ENCODE measurements at regions of chr15 and their contacts with region 1.

Region 1: GRCh38 chr15:89556413-89557262 is 18.6 kb upstream of the TICRR start:
- DNase-seq: peak; percentile 49
- H3K4me3 Mint-ChIP-seq: no peak overlapping the region
- H3K27ac Mint-ChIP-seq: no peak overlapping the region
- H3K4me1 Mint-ChIP-seq: peaks cover 1% of the 10 kb centered on the region
- H3K27me3 Mint-ChIP-seq: peaks cover 4% of the 10 kb centered on the region

Region 2: DNA sequence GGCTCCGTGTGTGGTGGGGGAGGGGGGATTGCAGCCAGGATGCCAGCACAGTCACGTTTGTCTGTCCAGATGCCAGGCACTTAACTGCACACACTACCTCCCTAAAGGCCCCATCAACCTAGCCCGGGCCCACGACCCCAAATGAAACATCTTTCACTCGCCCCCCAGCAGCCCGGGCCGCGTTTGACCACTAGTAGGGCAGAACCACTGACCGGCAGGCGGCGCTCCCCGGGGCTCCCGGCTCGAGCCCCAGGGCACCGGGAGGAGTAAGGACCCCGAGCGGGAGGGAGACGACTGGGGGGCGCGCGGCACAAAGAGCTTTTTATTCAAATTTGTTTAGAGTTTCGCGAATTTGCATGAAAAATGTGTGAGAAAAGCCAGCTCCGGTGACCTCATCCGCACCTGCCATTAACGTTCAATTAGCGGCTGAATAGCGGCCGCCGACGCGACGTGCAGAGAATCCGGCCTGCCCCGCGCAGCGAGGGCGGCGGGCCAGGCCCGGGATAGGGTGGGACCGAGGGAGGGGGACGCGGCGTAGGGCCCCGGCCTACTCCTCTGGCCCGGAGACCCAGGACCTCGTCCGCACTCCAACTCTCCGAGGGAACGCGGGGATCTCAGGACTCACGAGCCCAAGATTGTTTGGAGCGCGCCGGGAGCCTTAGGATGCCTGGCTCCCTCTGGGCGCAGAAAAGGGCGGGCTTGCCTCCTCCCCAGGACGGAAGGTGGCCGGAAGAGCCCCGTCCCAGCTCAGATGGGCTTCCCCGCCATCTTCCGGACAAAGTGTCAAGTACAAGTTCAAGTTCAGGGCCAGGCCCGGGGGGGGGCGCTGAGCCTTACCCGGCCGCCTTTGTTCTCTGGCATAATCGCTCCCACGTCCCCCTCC is 157.2 kb before region 1 on chr15:
- CTCF ChIA-PET with region 1: no interaction called
- POLR2A ChIA-PET with region 1: no interaction called
- intact Hi-C with region 1: no loop called
- DNase-seq: peak; percentile 55
- H3K4me3 Mint-ChIP-seq: peak overlapping the region; percentile 73
- H3K27ac Mint-ChIP-seq: no peak overlapping the region
- H3K4me1 Mint-ChIP-seq: peaks cover 7% of the 10 kb centered on the region
- H3K27me3 Mint-ChIP-seq: peaks cover 56% of the 10 kb centered on the region

Region 3: DNA sequence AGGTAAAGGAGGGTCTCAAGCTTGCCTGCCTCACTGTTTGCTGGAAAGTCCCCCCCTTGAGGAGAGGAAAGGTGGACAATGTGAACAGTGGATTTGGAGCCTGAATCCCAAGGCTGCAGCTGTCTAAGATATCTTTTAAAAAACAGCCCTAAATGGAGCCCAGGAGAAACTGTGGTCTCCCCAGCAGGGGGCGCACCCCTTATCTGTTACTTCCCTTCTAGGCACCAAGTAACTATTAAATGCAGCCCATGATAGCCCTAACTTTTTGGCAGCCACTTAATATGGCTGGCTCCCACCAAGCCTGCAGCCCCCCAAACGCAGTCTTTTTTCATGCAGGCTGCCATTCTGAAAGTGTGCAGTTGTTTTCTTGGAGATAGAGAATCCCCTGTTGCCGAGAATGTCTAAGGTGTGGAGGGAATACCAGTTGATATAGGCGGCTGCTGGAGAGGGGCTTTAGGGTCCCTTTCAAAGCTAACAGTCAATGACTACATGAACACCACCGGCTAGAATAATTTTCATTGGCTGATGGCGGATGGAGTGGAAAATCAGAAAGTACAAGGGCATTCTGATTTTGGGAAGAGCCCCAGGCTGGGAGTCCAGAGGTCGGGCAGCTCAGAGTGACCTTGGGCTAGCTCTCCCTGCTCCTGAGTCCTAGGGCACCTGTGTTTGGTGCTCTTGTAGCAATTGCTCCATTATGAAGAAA is 61.6 kb before region 1 on chr15:
- CTCF ChIA-PET with region 1: interaction called, 4 read pairs
- POLR2A ChIA-PET with region 1: no interaction called
- intact Hi-C with region 1: loop called (anchors 2 kb)
- DNase-seq: peak; percentile 59
- H3K4me3 Mint-ChIP-seq: no peak overlapping the region
- H3K27ac Mint-ChIP-seq: no peak overlapping the region
- H3K4me1 Mint-ChIP-seq: peaks cover 6% of the 10 kb centered on the region
- H3K27me3 Mint-ChIP-seq: peaks cover 57% of the 10 kb centered on the region

Measured in activated CD4-positive, alpha-beta memory T cell treated with anti-CD3 and anti-CD28 coated beads for 36 hours (primary cell).